Lower leg skin (tissue), 4 donors: ENCODE measurements at regions of chr22 and their contacts with region 1.

Region 1: GRCh38 chr22:45268958-45269844 is 15.5 kb upstream of the UPK3A start:
- DNase-seq: peak; percentile 62 to 97
- H3K4me3 ChIP-seq: peak overlapping the region; percentile 39
- CTCF ChIP-seq: no peak
- POLR2A ChIP-seq: no peak

Region 2: DNA sequence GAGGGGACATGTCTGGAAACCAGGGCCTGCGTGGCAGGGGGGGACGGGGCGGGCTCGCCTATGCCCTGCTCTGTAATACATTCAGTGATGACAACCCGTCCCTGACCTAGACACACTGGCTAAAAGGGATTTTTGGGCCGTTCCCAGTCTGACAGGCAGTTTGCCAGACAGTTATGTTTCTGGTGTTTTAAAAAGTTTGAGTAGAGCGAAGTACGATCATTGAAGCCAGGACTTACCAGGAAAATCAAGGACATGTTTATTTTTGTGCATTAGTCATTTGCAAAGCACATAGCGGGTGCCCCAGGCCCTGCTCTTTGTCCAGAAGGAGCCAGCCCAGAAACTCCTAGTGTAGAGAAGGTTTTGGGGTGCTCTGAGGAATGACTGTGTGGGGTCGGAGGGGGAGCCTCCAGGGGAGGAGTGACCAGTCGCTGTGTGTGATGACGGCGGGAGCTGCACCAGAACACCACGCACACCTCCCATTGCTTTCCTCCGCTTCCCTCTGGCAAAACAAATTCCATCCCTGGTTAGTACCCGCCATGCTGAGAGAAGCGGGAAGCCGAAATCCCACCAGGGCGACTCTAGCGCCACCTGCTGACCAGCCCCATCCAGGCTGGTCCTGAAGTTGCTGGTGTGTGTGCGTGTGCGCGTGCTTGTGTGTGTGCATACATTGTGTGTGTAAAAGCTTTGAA is 284.3 kb after region 1 on chr22:
- intact Hi-C with region 1: loop called (anchors 5 kb)
- DNase-seq: peak; percentile 72 to 95
- H3K4me3 ChIP-seq: no peak overlapping the region
- CTCF ChIP-seq: peak in 1 of 3 donors; percentile 60
- POLR2A ChIP-seq: no peak